Lower lobe of right lung (tissue), 2 donors: ENCODE measurements at regions of chr15 and their contacts with region 1.

Region 1: GRCh38 chr15:71743861-71744382 is 66.4 kb upstream of the NR2E3 start:
- DNase-seq: no peak
- ATAC-seq: peak in 1 of 2 donors; percentile 41
- H3K4me3 ChIP-seq: no peak overlapping the region
- H3K27ac ChIP-seq: no peak overlapping the region
- H3K4me1 ChIP-seq: no peaks in the 10 kb centered on the region
- H3K27me3 ChIP-seq: no peaks in the 10 kb centered on the region
- CTCF ChIP-seq: peak; percentile 78

Region 2: GRCh38 chr15:71800835-71801745 is 57.2 kb after region 1 on chr15:
- intact Hi-C with region 1: loop called (anchors 5 kb)
- DNase-seq: no peak
- ATAC-seq: peak; percentile 93
- H3K4me3 ChIP-seq: peak overlapping the region; percentile 10
- H3K27ac ChIP-seq: no peak overlapping the region
- H3K4me1 ChIP-seq: no peaks in the 10 kb centered on the region
- H3K27me3 ChIP-seq: no peaks in the 10 kb centered on the region
- CTCF ChIP-seq: peak; percentile 84